ENCODE measurements at regions of chr7 and their contacts with region 1.

Region 1: GRCh38 chr7:121081327-121081936 is 92.9 kb downstream of the CPED1 start:
- DNase-seq: peak; percentile 45
- H3K4me3 ChIP-seq: no peak overlapping the region
- H3K27ac ChIP-seq: no peak overlapping the region
- H3K4me1 ChIP-seq: peaks cover 6 to 33% of the 10 kb centered on the region in 2 experiments
- H3K27me3 ChIP-seq: no peaks in the 10 kb centered on the region
- CTCF ChIP-seq: peak; percentile 91
- EP300 ChIP-seq: no peak
- RAD21 ChIP-seq: peak; percentile 95

Region 2: DNA sequence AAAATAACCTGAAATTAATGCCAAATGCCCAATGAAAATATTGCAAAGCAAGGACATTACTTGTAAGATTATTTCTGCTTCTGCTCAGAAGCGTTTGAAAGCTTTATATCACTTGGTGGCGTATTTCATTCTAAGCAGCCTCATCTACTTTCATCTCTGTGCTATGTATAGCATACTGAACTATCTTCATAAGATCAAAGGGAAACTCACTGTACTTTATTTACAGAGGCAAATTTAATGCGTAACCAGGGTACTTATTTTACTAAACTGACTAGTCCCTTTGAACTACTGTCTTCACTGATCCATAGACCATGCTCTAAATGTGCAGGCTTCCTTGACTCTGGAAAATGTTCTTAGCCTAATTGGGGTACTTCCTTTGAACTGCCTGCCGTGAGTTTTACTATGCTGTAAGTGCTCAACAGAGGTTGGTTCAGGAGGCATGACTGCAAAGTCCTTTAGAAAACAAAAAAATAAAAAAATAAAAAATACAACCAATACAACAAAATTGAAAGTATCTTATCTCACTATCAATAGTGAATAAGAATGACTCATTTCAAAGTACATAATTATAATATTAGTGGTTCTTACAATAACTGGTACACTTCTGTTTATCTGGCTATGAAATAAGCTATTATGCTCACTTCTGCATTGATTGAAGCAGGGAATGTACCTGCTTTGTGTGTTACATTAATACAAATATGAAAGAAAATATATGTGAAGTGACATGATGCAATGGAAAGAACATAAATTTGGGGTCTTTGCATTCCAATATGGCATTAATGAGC is 182.5 kb before region 1 on chr7:
- CTCF ChIA-PET with region 1: no interaction called
- POLR2A ChIA-PET with region 1: no interaction called
- DNase-seq: no peak
- H3K4me3 ChIP-seq: no peak overlapping the region
- H3K27ac ChIP-seq: no peak overlapping the region
- H3K4me1 ChIP-seq: no peaks in the 10 kb centered on the region
- H3K27me3 ChIP-seq: no peaks in the 10 kb centered on the region; the same call in 1 of the 2 replicates
- CTCF ChIP-seq: no peak
- EP300 ChIP-seq: no peak
- RAD21 ChIP-seq: no peak

Region 3: DNA sequence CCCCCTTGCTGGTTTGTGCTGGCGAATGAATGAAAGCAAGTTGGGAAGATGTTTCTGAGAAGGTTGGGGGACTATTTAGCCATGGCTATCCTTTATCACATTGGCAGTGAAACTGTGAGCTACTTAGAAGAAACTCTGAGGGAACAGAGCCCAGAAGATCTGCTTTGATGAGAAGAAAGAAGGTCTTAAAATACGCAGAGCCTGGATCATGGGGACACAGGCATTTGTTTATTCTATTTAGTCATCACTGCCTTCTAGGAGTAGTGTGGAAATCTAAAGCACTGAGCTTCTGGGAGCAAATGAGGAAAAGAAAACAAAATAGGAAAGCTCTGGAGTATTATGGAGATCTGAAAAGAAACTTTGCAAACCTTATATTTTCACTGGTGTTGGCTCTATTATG is 64.5 kb before region 1 on chr7:
- CTCF ChIA-PET with region 1: interaction called, 12 read pairs
- POLR2A ChIA-PET with region 1: no interaction called
- DNase-seq: no peak
- H3K4me3 ChIP-seq: no peak overlapping the region
- H3K27ac ChIP-seq: no peak overlapping the region
- H3K4me1 ChIP-seq: peaks cover 0 to 7% of the 10 kb centered on the region in 2 experiments; a peak in 3 of 4 replicates
- H3K27me3 ChIP-seq: no peaks in the 10 kb centered on the region
- CTCF ChIP-seq: no peak
- EP300 ChIP-seq: no peak
- RAD21 ChIP-seq: no peak

Region 4: DNA sequence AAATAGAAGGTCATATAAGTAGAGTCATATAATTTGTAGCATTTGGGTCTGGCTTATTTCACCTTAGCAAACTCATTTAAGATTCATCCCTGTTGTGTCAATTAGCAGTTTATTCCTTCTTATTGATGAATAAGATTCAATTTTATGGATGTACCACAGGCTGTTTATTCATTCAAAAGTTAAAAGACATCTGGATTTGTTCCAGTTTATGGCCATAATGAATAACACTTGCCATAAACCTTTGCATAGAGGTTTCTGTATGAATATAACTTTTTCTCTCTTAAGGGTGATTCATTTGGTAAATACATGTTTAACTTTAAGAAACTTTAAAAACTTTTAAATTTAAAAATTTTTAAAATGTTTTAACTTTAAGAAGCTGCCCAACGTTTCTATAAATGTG is 26.5 kb before region 1 on chr7:
- CTCF ChIA-PET with region 1: interaction called, 16 read pairs
- POLR2A ChIA-PET with region 1: no interaction called
- DNase-seq: no peak
- H3K4me3 ChIP-seq: no peak overlapping the region
- H3K27ac ChIP-seq: no peak overlapping the region
- H3K4me1 ChIP-seq: no peaks in the 10 kb centered on the region
- H3K27me3 ChIP-seq: no peaks in the 10 kb centered on the region
- CTCF ChIP-seq: no peak
- EP300 ChIP-seq: no peak
- RAD21 ChIP-seq: no peak

Region 5: GRCh38 chr7:121061677-121062582 is 19.5 kb before region 1 on chr7:
- CTCF ChIA-PET with region 1: interaction called, 34 read pairs
- POLR2A ChIA-PET with region 1: no interaction called
- DNase-seq: no peak
- H3K4me3 ChIP-seq: no peak overlapping the region
- H3K27ac ChIP-seq: no peak overlapping the region; a peak in 1 of 4 replicates
- H3K4me1 ChIP-seq: peaks cover 0 to 3% of the 10 kb centered on the region in 2 experiments; a peak in 2 of 4 replicates
- H3K27me3 ChIP-seq: no peaks in the 10 kb centered on the region
- CTCF ChIP-seq: no peak
- EP300 ChIP-seq: no peak
- RAD21 ChIP-seq: no peak

Region 6: DNA sequence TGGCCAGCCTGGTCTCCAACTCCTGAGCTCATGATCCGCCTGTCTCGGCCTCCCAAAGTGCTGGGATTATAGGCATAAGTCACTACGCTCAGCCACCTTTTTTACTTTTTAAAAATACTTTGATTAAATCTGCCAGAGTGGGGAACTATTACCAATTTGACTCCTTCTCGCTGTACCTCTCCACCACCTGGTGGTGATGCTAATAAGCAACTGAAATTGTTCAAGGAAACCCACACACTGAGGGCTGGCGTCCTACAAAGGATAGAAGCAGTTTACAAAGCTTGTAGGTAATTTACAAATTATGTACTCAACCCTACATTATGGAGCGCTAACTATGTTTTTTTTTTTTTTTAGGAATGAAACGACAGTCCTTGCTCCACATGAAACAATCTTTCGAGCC is 18.1 kb after region 1 on chr7:
- CTCF ChIA-PET with region 1: interaction called, 32 read pairs
- POLR2A ChIA-PET with region 1: no interaction called
- DNase-seq: no peak
- H3K4me3 ChIP-seq: no peak overlapping the region
- H3K27ac ChIP-seq: no peak overlapping the region
- H3K4me1 ChIP-seq: peaks cover 0 to 3% of the 10 kb centered on the region in 2 experiments; a peak in 2 of 4 replicates
- H3K27me3 ChIP-seq: no peaks in the 10 kb centered on the region
- CTCF ChIP-seq: peak; percentile 34; the same call in 1 of the 2 replicates
- EP300 ChIP-seq: no peak
- RAD21 ChIP-seq: peak; percentile 12; the same call in 1 of the 2 replicates

Region 7: DNA sequence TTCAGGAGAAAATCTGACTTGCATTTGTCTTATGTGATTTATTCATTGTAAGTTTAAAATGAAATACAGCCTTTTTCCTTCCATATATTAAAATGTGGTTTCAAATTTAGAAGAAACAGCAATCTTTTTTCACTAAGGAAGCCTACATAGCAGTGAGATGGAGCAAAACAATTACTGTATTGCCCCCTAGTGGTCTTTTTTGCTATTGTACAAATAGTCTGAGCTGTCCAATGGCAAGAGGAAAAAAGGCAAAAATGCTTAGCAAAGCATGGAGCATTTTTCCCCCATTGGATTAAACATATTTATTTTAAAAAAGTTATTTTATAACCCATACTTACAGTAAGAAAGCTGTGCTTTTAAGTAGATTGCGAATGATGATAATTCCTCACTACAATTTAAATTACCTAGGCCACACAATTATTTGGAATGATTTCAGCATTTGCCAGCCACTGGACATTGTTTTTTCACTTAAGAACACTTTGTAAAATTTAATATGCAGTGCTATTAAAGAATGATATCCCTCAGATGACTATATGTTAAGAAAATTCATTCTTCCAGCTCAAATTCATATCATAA is 26.6 kb after region 1 on chr7:
- CTCF ChIA-PET with region 1: interaction called, 41 read pairs
- POLR2A ChIA-PET with region 1: no interaction called
- DNase-seq: peak; percentile 45
- H3K4me3 ChIP-seq: no peak overlapping the region
- H3K27ac ChIP-seq: no peak overlapping the region
- H3K4me1 ChIP-seq: no peaks in the 10 kb centered on the region
- H3K27me3 ChIP-seq: no peaks in the 10 kb centered on the region
- CTCF ChIP-seq: peak; percentile 99
- EP300 ChIP-seq: no peak
- RAD21 ChIP-seq: peak; percentile 95

Region 8: GRCh38 chr7:121273467-121274167 is 192.2 kb after region 1 on chr7:
- CTCF ChIA-PET with region 1: no interaction called
- POLR2A ChIA-PET with region 1: no interaction called
- DNase-seq: no peak
- H3K4me3 ChIP-seq: no peak overlapping the region
- H3K27ac ChIP-seq: no peak overlapping the region
- H3K4me1 ChIP-seq: peaks cover 0 to 4% of the 10 kb centered on the region in 2 experiments; a peak in 2 of 4 replicates
- H3K27me3 ChIP-seq: no peaks in the 10 kb centered on the region
- CTCF ChIP-seq: no peak
- EP300 ChIP-seq: no peak
- RAD21 ChIP-seq: no peak

Measured in SK-N-SH (cell line).